Activated CD8-positive, alpha-beta T cell treated with anti-CD3 and anti-CD28 coated beads for 36 hours (primary cell): ENCODE measurements at regions of chr10 and their contacts with region 1.

Region 1: DNA sequence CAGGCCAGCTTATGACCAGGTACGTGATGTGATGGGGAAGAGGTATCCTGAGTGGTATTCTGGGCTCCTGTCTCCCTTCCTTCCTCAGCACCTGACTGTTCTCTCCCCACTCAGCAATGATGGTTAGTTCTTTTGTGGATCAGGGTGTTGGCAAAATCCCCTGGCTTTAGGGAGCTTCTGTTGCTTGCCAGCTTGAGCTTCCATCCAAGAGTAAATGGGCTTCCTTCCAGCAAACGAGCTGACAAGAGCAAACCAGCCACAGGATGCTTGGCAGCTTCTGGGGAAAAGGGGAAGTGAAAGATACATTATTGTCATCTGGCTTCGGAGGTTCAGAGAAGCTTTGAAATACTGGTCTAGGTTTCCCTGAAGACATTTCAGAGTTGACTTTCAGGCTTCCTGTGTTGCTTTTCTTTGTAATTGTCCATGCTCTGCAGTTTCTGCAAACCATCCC is 5.2 kb downstream of the DUSP5 start:
- DNase-seq: no peak
- ATAC-seq: no peak
- H3K4me3 Mint-ChIP-seq: peak overlapping the region; percentile 99
- H3K27ac Mint-ChIP-seq: peak overlapping the region; percentile 91
- H3K4me1 Mint-ChIP-seq: peaks cover 76% of the 10 kb centered on the region
- H3K27me3 Mint-ChIP-seq: no peaks in the 10 kb centered on the region
- CTCF ChIP-seq: no peak

Region 2: GRCh38 chr10:110354322-110354766 is 148.5 kb before region 1 on chr10:
- CTCF ChIA-PET with region 1: interaction called, 55 read pairs
- POLR2A ChIA-PET with region 1: interaction called, 47 read pairs
- intact Hi-C with region 1: loop called (anchors 2 kb)
- DNase-seq: peak; percentile 95
- ATAC-seq: peak; percentile 40
- H3K4me3 Mint-ChIP-seq: no peak overlapping the region
- H3K27ac Mint-ChIP-seq: peak overlapping the region; percentile 87
- H3K4me1 Mint-ChIP-seq: peaks cover 60% of the 10 kb centered on the region
- H3K27me3 Mint-ChIP-seq: peaks cover 2% of the 10 kb centered on the region
- CTCF ChIP-seq: peak; percentile 90

Region 3: GRCh38 chr10:110530131-110530831 is 27.4 kb after region 1 on chr10:
- CTCF ChIA-PET with region 1: interaction called, 6 read pairs
- POLR2A ChIA-PET with region 1: interaction called, 18 read pairs
- intact Hi-C with region 1: loop called (anchors 2 kb)
- DNase-seq: peak; percentile 29
- ATAC-seq: no peak
- H3K4me3 Mint-ChIP-seq: no peak overlapping the region
- H3K27ac Mint-ChIP-seq: no peak overlapping the region
- H3K4me1 Mint-ChIP-seq: peaks cover 65% of the 10 kb centered on the region
- H3K27me3 Mint-ChIP-seq: no peaks in the 10 kb centered on the region
- CTCF ChIP-seq: no peak

Region 4: DNA sequence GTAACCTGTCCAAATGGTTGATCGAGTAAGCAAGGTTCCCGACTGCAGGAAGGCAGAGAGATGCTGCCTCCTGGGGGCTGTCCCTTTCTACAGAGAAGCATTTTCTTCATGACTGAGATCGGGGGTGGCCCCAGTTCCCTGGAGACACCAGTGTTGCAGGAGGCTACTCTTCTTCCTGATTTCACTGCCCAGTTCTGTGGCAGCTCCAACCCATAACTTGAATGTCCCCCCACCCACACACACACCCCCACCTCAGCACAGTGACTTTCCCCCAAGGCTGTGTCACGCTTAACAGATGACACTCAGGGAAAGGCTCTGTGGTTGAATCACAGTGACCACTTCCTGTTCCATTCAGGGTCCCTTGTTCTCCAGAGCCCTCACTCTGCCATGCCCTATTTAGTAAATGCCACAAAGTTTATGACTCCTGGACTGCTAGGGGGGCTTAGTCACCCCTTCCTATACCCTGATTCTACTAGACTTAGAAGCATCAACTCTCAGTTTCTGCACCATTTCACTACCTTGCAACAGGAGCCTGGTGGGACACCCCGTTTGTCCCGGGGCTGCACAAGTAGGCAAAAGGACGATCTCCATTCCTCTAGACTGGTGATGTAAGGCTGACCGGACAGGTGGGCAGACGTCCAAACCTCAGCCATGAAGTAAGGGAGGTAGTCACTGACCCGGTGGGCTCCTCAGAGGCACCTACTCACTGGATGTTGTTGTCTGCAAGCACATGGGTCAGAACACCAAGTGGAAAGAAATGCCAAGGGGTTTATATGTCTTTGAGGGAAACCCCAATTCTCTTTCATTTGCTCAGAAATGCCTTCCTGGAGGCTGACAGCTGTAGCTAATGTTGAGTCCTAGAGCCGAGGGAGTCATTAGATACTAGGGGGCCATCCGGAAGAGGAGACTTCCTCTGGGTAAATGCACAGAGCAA is 33.3 kb after region 1 on chr10:
- CTCF ChIA-PET with region 1: interaction called, 14 read pairs
- POLR2A ChIA-PET with region 1: interaction called, 9 read pairs
- intact Hi-C with region 1: no loop called
- DNase-seq: peak; percentile 95
- ATAC-seq: peak; percentile 92
- H3K4me3 Mint-ChIP-seq: peak overlapping the region; percentile 24
- H3K27ac Mint-ChIP-seq: peak overlapping the region; percentile 90
- H3K4me1 Mint-ChIP-seq: peaks cover 46% of the 10 kb centered on the region
- H3K27me3 Mint-ChIP-seq: no peaks in the 10 kb centered on the region
- CTCF ChIP-seq: no peak